ENCODE measurements at regions of chr3 and their contacts with region 1.

Region 1: GRCh38 chr3:150870396-150870795 is 34.8 kb downstream of the MINDY4B start:
- DNase-seq: no peak
- H3K4me3 Mint-ChIP-seq: no peak overlapping the region
- H3K27ac Mint-ChIP-seq: no peak overlapping the region
- H3K4me1 Mint-ChIP-seq: peaks cover 2% of the 10 kb centered on the region
- H3K27me3 Mint-ChIP-seq: peaks cover 12% of the 10 kb centered on the region

Region 2: DNA sequence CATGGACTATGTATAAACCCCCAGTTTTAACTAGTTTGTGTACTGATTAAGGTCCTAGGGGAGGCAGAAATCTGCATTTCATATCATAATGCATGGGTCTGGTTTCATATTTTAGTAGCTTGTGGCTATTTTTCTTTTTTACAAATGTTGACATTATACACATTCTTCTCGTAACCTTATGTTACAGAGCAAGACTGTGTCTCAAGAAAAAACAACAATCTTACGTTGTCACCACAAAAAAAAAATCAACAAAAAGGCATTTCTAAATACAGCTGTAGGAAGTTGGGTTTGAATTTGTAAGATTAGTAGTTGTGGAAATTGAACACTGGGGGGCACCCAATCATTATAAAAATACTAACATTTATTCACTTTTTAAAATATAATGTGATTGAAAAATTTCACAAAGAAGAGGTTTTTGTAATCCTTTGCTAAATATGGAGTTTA is 342.0 kb before region 1 on chr3:
- intact Hi-C with region 1: loop called (anchors 1 kb)
- DNase-seq: no peak
- H3K4me3 Mint-ChIP-seq: no peak overlapping the region
- H3K27ac Mint-ChIP-seq: no peak overlapping the region
- H3K4me1 Mint-ChIP-seq: peaks cover 7% of the 10 kb centered on the region
- H3K27me3 Mint-ChIP-seq: peaks cover 17% of the 10 kb centered on the region

Region 3: GRCh38 chr3:150797115-150797514 is 73.3 kb before region 1 on chr3:
- intact Hi-C with region 1: loop called (anchors 2 kb)
- DNase-seq: no peak
- H3K4me3 Mint-ChIP-seq: no peak overlapping the region
- H3K27ac Mint-ChIP-seq: peak overlapping the region; percentile 1
- H3K4me1 Mint-ChIP-seq: peaks cover 23% of the 10 kb centered on the region
- H3K27me3 Mint-ChIP-seq: peaks cover 2% of the 10 kb centered on the region

Region 4: DNA sequence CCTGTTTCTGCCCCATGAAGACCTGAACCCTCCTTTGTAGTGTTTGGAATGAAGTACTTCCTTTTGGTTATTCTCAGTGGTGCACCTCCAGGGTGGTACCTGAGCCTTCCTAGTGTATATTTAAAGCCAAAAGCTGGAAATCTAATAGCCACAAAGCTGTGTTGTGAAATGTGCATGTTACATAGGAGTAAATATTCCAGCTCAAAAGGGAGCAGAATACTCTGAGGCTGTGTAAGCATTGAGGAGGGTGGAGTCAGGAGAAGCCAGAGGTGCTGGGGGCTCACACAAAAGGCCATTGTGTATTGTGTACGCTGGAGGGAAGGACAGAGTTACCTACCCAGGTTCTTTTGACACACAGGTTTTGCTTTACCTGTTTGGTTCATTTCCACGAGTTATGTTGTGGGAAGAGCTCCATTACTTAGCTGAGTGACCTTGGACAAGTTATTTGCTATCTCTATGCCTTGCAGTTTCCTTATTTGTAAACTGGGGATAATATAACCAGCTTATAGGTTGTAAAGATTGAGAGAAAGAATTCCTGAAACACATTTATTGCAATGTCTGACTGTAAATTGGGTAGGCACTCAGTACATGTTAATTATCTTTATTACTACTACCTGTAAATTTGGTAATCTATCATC is 307.9 kb after region 1 on chr3:
- intact Hi-C with region 1: no loop called
- DNase-seq: no peak
- H3K4me3 Mint-ChIP-seq: no peak overlapping the region
- H3K27ac Mint-ChIP-seq: no peak overlapping the region
- H3K4me1 Mint-ChIP-seq: peaks cover 37% of the 10 kb centered on the region
- H3K27me3 Mint-ChIP-seq: peaks cover 1% of the 10 kb centered on the region

Region 5: DNA sequence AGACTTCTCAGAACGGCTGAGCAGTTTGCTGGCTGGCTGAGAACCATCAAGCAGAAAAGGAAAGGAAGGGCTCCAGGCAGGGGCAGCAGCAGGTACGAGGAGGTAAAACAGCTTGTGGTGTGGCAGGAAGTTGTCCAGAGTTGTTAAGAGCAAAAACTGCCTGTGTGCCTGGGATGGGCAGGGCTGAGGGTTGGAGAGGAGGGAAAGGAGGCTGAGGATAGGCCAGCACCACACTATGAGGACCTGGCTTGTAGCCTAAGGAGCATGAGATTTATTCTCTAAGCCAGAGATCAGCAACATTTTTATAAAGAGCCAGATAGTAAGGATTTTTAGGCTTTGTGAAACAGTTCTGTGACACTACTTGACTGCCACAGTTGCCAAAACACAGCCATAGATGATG is 582.4 kb after region 1 on chr3:
- intact Hi-C with region 1: no loop called
- DNase-seq: no peak
- H3K4me3 Mint-ChIP-seq: no peak overlapping the region
- H3K27ac Mint-ChIP-seq: no peak overlapping the region
- H3K4me1 Mint-ChIP-seq: no peaks in the 10 kb centered on the region
- H3K27me3 Mint-ChIP-seq: peaks cover 12% of the 10 kb centered on the region